Transverse colon (tissue), 4 donors: ENCODE measurements at regions of chr11 and their contacts with region 1.

Region 1: GRCh38 chr11:19519912-19520641 is 192.6 kb upstream of the NAV2 start:
- DNase-seq: no peak
- H3K4me3 ChIP-seq: no peak overlapping the region
- H3K27ac ChIP-seq: no peak overlapping the region
- H3K4me1 ChIP-seq: no peaks in the 10 kb centered on the region
- H3K27me3 ChIP-seq: peaks cover 4% of the 10 kb centered on the region
- CTCF ChIP-seq: no peak
- EP300 ChIP-seq: no peak
- POLR2A ChIP-seq: no peak

Region 2: GRCh38 chr11:18865951-18866350 is 654.1 kb before region 1 on chr11:
- in situ Hi-C with region 1: no loop called
- intact Hi-C with region 1: loop called (anchors 5 kb)
- DNase-seq: no peak
- H3K4me3 ChIP-seq: no peak overlapping the region
- H3K27ac ChIP-seq: no peak overlapping the region
- H3K4me1 ChIP-seq: no peaks in the 10 kb centered on the region
- H3K27me3 ChIP-seq: no peaks in the 10 kb centered on the region
- CTCF ChIP-seq: no peak
- EP300 ChIP-seq: no peak
- POLR2A ChIP-seq: no peak

Region 3: GRCh38 chr11:19259487-19260345 is 260.4 kb before region 1 on chr11:
- in situ Hi-C with region 1: no loop called
- intact Hi-C with region 1: no loop called
- DNase-seq: peak; percentile 75
- H3K4me3 ChIP-seq: peak overlapping the region in 1 of 4 donors; percentile 19
- H3K27ac ChIP-seq: no peak overlapping the region
- H3K4me1 ChIP-seq: peaks cover 0 to 4% (median 0%) of the 10 kb centered on the region in 4 donors
- H3K27me3 ChIP-seq: no peaks in the 10 kb centered on the region
- CTCF ChIP-seq: peak; percentile 87 to 96 (median 92)
- EP300 ChIP-seq: no peak
- POLR2A ChIP-seq: no peak